ENCODE measurements at regions of chr16 and their contacts with region 1.

Region 1: DNA sequence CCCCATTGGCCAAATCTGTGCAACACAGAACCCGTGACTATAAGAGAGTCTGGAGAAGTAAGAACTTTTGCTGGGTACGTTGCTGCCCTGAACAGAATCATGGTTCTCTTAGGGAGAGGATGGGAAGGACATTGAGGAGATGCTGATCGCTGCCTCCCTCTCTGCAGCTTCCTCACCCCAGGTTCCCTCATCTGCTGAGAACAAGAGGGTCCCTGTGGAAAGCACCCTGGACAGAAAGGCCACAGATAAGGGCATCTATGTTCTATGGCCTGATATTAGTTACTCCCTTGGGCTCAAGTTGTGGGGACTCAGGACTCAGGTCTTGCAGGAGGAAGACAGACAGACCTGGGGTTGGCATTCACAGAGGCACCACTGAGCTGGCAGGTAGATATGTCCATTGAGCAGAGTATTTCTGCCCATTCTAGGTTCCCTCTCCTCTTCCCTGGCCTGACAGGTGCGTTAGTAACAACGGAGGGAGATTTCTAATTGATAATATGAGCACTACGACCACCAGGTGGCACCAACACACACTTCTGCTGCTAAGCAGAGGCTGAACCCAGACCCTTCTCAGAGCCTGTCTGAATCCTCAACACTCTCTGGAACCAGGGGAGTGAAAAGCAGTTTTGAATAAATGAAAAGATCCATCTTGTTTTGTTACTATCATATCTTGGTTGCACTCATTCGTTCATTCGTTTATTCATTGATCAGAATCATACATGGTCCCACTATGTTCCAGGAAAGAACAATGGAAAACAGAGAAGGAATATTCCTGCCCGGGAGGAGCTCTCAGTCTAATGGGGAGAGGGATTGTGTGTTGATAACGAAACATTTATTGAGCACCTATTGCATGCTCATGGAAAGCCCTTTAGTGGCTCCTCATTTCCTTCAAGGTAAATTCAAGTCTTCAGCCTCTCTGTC is 56.4 kb downstream of the SLC6A2 start:
- DNase-seq: peak; percentile 67

Region 2: GRCh38 chr16:55240888-55241287 is 471.3 kb before region 1 on chr16:
- in situ Hi-C with region 1: no loop called
- DNase-seq: no peak

Region 3: DNA sequence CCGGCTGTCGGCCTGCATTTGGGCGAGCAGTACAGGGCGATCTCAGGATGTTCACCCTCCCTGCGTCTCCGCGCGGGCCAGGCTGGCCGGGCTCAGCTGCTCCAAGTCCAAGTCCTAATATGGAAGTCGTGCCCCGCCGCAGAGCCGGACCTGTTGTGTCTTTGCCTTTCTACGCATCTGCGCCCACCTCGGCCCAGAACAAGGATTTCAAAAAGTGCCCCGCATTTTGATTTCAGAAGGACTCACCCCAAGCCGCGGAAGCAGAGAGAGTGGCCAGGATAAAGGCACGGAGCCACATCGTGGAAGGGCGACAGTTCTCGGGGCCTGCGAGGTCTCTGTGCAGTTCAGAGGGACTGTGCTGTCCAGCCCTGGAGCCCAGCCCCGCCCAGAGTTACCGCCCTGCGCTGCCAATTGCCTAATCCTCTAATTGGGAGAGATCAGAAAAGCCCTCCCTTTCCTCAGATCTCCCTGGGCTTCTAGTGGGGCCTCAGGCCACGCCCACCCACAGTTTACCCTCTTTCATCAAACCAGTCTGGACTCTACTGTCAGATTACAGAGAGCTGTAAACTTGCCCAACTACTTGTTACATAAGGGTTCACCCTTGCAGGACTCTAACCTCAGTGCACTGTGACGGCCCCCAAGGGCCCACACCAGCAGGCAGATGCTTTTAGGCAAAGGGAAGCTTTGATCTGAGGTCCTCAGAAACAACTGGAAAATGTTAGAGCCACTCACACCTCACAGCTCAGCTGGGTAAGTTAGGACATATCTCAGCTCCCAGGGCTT is 120.7 kb after region 1 on chr16 and contains the start of gene CES1:
- in situ Hi-C with region 1: loop called (anchors 10 kb)
- DNase-seq: no peak

Region 4: GRCh38 chr16:56005958-56006357 is 293.7 kb after region 1 on chr16:
- in situ Hi-C with region 1: no loop called
- DNase-seq: no peak

Measured in KBM-7 (cell line).